ENCODE measurements at regions of chr22 and their contacts with region 1.

Region 1: GRCh38 chr22:18060646-18061620 is 16.9 kb upstream of the PEX26 start:
- DNase-seq: peak; percentile 90
- H3K4me3 ChIP-seq: no peak overlapping the region
- H3K27ac ChIP-seq: peak overlapping the region; percentile 57
- H3K4me1 ChIP-seq: peaks cover 70% of the 10 kb centered on the region
- H3K27me3 ChIP-seq: no peaks in the 10 kb centered on the region
- CTCF ChIP-seq: no peak

Region 2: GRCh38 chr22:17920145-17920605 is 140.8 kb before region 1 on chr22:
- CTCF ChIA-PET with region 1: no interaction called
- dilution Hi-C with region 1: no loop called
- in situ Hi-C with region 1: no loop called
- intact Hi-C with region 1: loop called (anchors 2 kb)
- DNase-seq: peak; percentile 72
- H3K4me3 ChIP-seq: no peak overlapping the region
- H3K27ac ChIP-seq: no peak overlapping the region
- H3K4me1 ChIP-seq: peaks cover 77% of the 10 kb centered on the region
- H3K27me3 ChIP-seq: no peaks in the 10 kb centered on the region
- CTCF ChIP-seq: peak in 1 of 2 donors; percentile 22

Region 3: DNA sequence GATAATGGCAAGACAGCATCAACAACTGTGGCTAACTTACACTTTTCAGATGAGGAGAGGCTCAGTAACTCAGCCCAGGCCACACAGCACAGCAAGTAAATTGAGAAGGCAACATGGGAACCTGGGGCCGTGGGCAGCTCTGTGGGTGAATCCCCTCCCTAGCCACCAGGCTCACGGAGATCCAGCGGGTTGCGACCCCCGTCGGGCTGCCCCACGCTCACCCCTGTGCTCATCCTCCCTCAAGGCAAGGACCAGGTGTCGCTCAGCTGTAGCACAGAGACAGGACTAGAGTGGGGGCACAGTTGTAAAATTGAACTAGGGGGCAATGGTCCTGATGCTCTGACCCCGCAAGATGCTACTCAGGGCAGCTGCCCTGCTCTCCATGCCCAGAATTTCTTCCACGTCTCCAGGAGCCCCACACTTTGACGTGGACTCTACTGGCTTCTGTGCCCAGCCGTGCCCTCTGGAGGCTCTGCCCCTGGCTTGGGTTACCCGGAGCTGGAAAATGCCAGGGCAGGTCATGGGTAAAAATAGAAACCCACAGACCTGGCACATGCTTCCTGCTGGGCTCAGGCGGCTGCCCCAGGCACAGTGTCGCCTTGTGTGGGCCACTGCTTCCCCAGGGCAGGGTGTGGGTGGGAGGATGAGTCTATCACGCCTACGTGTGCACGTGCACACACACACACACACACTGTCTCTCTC is 58.6 kb after region 1 on chr22:
- CTCF ChIA-PET with region 1: no interaction called
- dilution Hi-C with region 1: no loop called
- in situ Hi-C with region 1: no loop called
- intact Hi-C with region 1: no loop called
- DNase-seq: no peak
- H3K4me3 ChIP-seq: no peak overlapping the region
- H3K27ac ChIP-seq: no peak overlapping the region
- H3K4me1 ChIP-seq: peaks cover 7% of the 10 kb centered on the region
- H3K27me3 ChIP-seq: no peaks in the 10 kb centered on the region
- CTCF ChIP-seq: no peak

Measured in mammary epithelial cell (primary cell).